MCF 10A (cell line): ENCODE measurements at regions of chr11 and their contacts with region 1.

Region 1: GRCh38 chr11:17730608-17731462 is 3.7 kb upstream of the KCNC1 start:
- DNase-seq: peak; percentile 90
- H3K4me3 Mint-ChIP-seq: no peak overlapping the region
- H3K27ac Mint-ChIP-seq: no peak overlapping the region
- H3K4me1 Mint-ChIP-seq: no peaks in the 10 kb centered on the region
- H3K27me3 Mint-ChIP-seq: peaks cover 44% of the 10 kb centered on the region
- CTCF ChIP-seq: peak; percentile 94

Region 2: DNA sequence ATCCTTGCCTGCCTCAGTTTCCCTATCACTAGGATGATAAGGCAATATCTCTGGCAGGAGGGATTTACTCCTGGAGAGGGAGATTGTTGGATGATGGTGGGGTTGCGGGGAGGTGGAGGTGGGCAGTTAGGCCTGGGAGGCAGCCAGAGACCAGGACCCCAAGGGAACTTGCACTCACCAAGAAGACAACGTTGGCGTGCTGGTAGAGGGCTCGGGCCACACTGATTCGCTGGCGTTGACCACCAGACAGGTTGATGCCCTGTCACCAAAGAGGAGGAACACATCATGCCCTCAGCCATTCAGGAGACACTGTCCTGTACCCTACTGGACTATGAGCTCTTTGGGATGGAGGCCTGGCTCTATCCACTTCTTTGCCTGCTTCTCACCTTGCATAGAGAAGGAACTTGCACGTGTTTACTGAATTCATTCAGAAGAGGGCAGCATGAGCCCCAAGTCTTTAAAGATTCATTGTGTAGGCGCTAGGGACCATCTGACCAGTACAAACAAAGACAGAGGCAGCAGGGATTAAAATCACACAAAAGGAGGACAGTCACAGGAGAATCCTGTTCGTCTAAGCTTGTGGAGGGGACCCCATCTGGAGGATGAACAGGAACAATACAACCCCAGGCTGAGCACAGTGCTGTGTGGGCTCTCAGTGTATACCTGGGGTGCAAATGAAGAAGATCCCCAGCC is 318.2 kb before region 1 on chr11:
- CTCF ChIA-PET with region 1: no interaction called
- POLR2A ChIA-PET with region 1: no interaction called
- intact Hi-C with region 1: no loop called
- DNase-seq: no peak
- H3K4me3 Mint-ChIP-seq: no peak overlapping the region
- H3K27ac Mint-ChIP-seq: no peak overlapping the region
- H3K4me1 Mint-ChIP-seq: no peaks in the 10 kb centered on the region
- H3K27me3 Mint-ChIP-seq: peaks cover 42% of the 10 kb centered on the region
- CTCF ChIP-seq: no peak

Region 3: DNA sequence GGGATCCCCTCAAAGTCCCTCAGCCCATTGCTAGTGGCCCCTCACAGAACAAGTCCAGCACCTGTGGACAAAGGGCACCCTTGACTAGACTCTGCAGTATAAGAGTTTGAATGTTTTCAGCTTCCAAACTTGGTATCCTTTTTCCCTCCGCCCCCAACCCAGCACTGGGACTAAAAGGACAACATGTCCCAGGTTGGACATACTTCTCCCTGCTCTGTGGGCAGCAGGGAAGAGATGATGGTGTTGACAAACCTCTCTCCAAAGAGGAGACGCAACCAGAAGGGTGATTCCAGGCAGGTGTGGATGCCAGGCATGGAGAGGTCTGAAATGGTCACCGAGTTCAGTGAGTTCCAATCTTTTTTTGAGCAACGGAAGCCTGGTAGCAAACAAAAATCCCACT is 16.0 kb before region 1 on chr11:
- CTCF ChIA-PET with region 1: interaction called, 17 read pairs
- POLR2A ChIA-PET with region 1: no interaction called
- intact Hi-C with region 1: no loop called
- DNase-seq: no peak
- H3K4me3 Mint-ChIP-seq: no peak overlapping the region
- H3K27ac Mint-ChIP-seq: no peak overlapping the region
- H3K4me1 Mint-ChIP-seq: no peaks in the 10 kb centered on the region
- H3K27me3 Mint-ChIP-seq: peaks cover 10% of the 10 kb centered on the region
- CTCF ChIP-seq: no peak

Region 4: DNA sequence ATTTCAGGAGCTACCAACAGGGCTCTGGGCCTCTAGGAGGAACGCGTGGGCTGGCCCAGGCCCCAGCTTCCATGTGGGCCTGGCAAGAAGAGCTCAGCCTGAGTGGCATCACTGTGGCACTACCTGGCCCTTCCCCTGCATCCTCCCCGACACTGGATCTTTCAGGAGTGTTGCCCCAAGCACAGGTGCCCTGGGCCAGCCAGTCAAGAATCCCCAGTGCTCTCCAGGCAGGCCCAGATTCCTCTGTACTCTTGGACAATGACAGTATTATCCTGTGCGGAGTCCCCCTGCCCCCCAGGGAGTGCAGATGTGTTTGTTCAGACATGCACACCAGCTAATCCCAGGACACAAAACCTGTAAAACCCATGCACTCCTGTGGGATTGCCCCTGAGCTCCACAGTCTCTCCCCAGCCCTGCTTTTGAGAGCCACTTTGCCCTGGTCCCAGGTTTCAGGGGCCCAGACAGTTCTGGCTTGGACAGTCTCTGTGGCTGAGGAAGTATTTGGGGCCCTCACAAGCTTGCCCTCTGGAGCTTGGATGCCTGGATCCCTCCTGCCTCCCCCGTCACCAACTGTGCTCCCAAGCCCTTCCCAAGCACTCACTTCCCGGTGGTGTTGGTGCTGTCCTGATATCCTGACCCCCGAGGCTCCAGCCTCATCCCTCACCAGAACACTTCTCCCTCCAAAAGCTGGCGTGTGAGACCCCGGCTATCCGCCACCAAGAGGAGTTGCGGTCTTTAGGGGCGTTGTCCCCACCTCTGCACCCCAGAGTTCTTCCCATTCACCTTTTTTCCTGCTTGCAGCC is 43.6 kb after region 1 on chr11:
- CTCF ChIA-PET with region 1: interaction called, 10 read pairs
- POLR2A ChIA-PET with region 1: no interaction called
- intact Hi-C with region 1: no loop called
- DNase-seq: no peak
- H3K4me3 Mint-ChIP-seq: no peak overlapping the region
- H3K27ac Mint-ChIP-seq: no peak overlapping the region
- H3K4me1 Mint-ChIP-seq: no peaks in the 10 kb centered on the region
- H3K27me3 Mint-ChIP-seq: peaks cover 10% of the 10 kb centered on the region
- CTCF ChIP-seq: no peak

Region 5: DNA sequence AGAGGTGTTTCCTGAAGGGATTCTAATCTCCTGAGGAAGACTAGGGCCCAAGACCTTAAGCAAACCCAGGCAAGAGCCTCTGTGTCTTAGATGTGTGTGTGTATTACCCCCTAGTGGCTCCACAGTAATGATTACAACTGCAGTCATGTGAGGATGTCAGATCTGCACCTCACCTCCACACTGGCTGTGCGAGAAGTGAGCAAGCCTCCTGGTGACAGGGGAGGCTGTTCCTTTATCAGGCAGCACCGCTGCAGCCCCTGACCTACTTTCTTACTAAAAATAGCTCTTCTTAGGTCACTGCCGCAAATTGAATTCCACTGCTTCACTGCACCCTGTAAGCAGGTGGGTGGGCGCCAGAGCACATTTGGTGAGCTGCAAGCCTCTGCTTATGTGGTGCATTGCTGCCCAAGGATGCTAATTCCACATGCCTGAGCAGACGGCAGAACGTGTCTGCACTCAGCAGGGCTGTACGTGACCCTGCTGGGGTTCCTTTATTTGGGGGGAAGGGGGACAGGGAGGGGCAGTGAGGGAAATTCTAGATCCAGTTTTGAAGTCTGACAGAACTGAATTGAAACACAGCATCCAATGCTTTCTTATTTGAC is 116.1 kb after region 1 on chr11:
- CTCF ChIA-PET with region 1: interaction called, 18 read pairs
- POLR2A ChIA-PET with region 1: no interaction called
- intact Hi-C with region 1: loop called (anchors 2 kb)
- DNase-seq: peak; percentile 58
- H3K4me3 Mint-ChIP-seq: no peak overlapping the region
- H3K27ac Mint-ChIP-seq: no peak overlapping the region
- H3K4me1 Mint-ChIP-seq: peaks cover 13% of the 10 kb centered on the region
- H3K27me3 Mint-ChIP-seq: no peaks in the 10 kb centered on the region
- CTCF ChIP-seq: no peak

Region 6: DNA sequence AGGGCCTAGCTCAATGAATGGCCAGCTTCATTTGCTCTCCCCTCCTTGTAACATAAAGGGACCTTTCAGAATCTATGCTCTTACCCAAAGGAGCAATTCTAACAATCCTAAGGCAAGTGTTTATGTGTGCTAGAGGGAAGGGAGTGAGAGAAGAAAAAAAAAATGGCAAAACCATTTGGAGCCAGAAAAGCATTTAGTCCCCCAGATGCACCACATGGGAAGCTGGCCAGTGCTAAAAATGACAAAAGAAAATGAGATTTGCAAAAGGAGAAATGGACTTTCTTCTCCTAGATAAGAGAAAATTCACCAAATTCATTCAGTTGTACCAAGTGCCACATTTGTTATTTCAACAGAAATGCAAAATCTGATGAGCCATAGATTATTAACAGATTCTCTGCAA is 229.3 kb after region 1 on chr11:
- CTCF ChIA-PET with region 1: interaction called, 15 read pairs
- POLR2A ChIA-PET with region 1: no interaction called
- intact Hi-C with region 1: no loop called
- DNase-seq: no peak
- H3K4me3 Mint-ChIP-seq: no peak overlapping the region
- H3K27ac Mint-ChIP-seq: no peak overlapping the region
- H3K4me1 Mint-ChIP-seq: no peaks in the 10 kb centered on the region
- H3K27me3 Mint-ChIP-seq: no peaks in the 10 kb centered on the region
- CTCF ChIP-seq: no peak

Region 7: DNA sequence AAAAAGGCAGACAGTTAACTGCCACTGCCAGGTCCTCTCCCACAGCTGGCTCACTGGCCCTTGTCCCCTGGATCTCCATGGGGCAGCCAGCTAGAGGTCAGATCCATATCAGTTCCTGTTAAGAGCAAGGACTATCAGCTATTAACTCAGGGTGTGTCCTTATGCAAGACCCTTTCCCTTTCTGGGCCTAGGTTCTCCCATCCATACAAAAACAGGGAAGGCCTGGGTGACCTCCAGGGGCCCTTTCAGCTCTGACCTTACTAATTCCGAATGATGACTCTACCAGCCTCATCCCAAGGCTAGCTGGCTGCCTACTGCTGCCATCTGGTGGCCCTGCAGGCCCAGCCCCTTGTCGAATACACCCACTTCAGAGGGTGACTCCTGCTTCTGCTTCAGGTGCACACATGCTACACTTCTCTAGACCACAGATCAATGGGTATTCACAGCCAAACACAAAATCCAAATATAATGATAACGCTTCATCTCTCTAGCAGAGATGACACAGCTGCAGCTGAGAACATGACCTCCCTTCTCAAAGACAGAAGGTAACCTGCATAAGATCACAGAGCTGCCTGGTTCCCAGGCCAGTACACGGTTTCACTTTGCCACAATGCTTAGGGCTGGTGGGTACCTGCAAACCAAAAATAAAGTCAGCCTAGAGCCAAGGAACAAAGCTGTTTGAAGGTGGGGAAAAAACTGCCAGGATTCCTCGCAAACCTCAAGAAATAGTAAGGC is 247.9 kb after region 1 on chr11:
- CTCF ChIA-PET with region 1: interaction called, 507 read pairs
- POLR2A ChIA-PET with region 1: interaction called, 16 read pairs
- intact Hi-C with region 1: loop called (anchors 1 kb)
- DNase-seq: peak; percentile 57
- H3K4me3 Mint-ChIP-seq: no peak overlapping the region
- H3K27ac Mint-ChIP-seq: no peak overlapping the region
- H3K4me1 Mint-ChIP-seq: no peaks in the 10 kb centered on the region
- H3K27me3 Mint-ChIP-seq: no peaks in the 10 kb centered on the region
- CTCF ChIP-seq: peak; percentile 75